ENCODE measurements at regions of chr15 and their contacts with region 1.

Region 1: DNA sequence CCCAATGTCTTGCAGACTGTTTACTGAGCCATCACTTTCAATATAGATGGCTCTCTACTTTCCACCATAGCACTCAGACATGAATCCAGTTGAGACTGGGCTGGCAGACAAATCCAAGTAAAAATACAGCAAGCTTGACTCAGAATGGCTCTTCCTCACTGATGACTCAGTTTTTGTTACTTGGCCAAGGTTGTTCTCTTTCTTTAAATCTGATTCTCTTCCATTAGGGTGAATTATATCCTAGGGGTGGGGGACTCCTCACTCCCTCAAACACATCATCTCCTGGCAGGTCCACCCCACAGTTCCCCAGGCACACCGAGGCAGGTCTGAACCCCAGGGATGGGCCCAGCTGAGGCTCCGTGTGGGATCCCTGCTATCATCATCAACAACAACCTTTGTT is 157.9 kb downstream of the MEX3B start:
- DNase-seq: no peak
- H3K4me3 ChIP-seq: no peak overlapping the region
- H3K27ac ChIP-seq: peak overlapping the region in 1 of 4 donors; percentile 7
- H3K4me1 ChIP-seq: peaks cover 3 to 19% (median 12%) of the 10 kb centered on the region in 3 donors
- H3K27me3 ChIP-seq: no peaks in the 10 kb centered on the region
- CTCF ChIP-seq: no peak
- POLR2A ChIP-seq: no peak

Region 2: DNA sequence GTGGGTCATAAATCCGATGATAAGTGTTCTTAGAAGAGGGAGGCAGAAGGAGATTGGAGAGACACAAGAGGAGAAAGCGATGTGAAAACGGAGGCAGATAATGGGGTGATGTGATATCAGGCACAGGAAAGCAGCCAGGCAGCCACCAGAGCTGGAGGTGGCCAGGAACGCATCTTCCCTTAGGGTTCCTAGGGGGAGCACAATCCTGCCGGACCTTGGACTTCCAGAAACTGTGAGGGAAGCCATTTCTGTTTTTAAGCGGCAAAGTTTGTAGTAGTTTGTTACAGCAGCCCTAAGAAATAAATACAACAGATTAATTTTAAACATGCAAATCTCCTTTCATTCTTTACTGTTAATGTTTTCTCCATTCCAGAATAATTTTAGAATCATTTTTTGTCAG is 254.0 kb before region 1 on chr15:
- intact Hi-C with region 1: no loop called
- DNase-seq: no peak
- H3K4me3 ChIP-seq: no peak overlapping the region
- H3K27ac ChIP-seq: no peak overlapping the region
- H3K4me1 ChIP-seq: no peaks in the 10 kb centered on the region
- H3K27me3 ChIP-seq: no peaks in the 10 kb centered on the region
- CTCF ChIP-seq: no peak
- POLR2A ChIP-seq: no peak

Region 3: GRCh38 chr15:81819924-81820635 is 67.8 kb before region 1 on chr15:
- intact Hi-C with region 1: loop called (anchors 10 kb)
- DNase-seq: no peak
- H3K4me3 ChIP-seq: no peak overlapping the region
- H3K27ac ChIP-seq: no peak overlapping the region
- H3K4me1 ChIP-seq: no peaks in the 10 kb centered on the region
- H3K27me3 ChIP-seq: peaks cover 0 to 8% (median 0%) of the 10 kb centered on the region in 4 donors
- CTCF ChIP-seq: no peak
- POLR2A ChIP-seq: no peak

Region 4: DNA sequence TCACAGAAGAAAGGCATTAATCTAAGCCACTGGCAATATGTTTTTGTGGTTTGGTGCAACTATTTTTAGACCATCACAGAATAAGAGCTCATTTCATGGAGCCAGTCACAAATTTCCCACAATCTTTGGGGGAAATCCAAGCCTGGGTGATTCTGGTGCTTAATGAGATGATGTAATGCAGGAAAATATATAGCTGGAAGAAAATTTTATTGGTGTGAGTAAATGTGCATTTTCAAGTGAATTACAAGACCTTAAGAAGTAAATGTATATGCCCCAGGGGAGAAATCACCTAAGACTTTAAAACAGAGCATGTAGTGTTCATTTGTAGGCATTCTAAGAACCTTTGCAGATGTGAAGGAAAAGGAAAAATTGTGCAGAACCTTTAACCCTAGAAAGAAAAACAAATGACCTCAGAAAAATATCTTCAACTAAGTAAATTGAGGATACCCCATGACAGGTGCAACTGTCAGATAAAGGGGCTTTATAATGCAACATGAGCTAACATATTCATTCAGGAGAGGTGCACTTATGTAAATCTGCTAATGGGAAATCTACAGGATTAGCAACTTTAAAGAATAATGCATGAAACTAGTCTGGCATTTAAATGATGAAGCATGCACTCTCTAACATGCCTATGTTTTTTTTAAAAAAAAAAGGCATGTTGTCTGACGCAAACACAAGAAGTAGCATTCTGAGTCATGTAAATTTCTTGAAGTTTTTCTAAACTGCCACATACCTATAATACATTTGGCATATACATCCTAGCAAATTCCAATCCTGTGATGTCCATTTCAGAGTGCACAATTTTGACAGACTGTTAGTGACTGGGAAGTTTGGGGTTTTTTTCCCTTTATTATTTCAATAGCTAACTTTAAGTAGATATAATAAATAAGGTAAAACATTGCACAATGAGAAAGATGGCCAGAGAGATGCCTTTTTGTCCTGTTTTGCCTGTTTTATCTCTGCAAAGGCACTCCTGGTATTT is 52.8 kb after region 1 on chr15:
- intact Hi-C with region 1: no loop called
- DNase-seq: no peak
- H3K4me3 ChIP-seq: no peak overlapping the region
- H3K27ac ChIP-seq: no peak overlapping the region
- H3K4me1 ChIP-seq: no peaks in the 10 kb centered on the region
- H3K27me3 ChIP-seq: no peaks in the 10 kb centered on the region
- CTCF ChIP-seq: no peak
- POLR2A ChIP-seq: no peak

Region 5: GRCh38 chr15:82003916-82004315 is 116.0 kb after region 1 on chr15:
- intact Hi-C with region 1: no loop called
- DNase-seq: no peak
- H3K4me3 ChIP-seq: no peak overlapping the region
- H3K27ac ChIP-seq: no peak overlapping the region
- H3K4me1 ChIP-seq: no peaks in the 10 kb centered on the region
- H3K27me3 ChIP-seq: no peaks in the 10 kb centered on the region
- CTCF ChIP-seq: no peak
- POLR2A ChIP-seq: no peak